PC-9 (cell line): ENCODE measurements at regions of chr9 and their contacts with region 1.

Region 1: GRCh38 chr9:127869310-127870152 is 7.9 kb downstream of the AK1 start:
- DNase-seq: peak; percentile 64 to 94
- H3K4me3 ChIP-seq: no peak overlapping the region
- H3K27ac ChIP-seq: no peak overlapping the region
- H3K4me1 ChIP-seq: peaks cover 4% of the 10 kb centered on the region; the same call in 1 of the 2 replicates
- H3K27me3 ChIP-seq: no peaks in the 10 kb centered on the region
- CTCF ChIP-seq: peak; percentile 91

Region 2: GRCh38 chr9:127742435-127743088 is 127.0 kb before region 1 on chr9:
- CTCF ChIA-PET with region 1: interaction called, 9 read pairs
- POLR2A ChIA-PET with region 1: interaction called, 3 read pairs
- intact Hi-C with region 1: loop called (anchors 1 kb)
- DNase-seq: peak; percentile 49 to 68
- H3K4me3 ChIP-seq: no peak overlapping the region
- H3K27ac ChIP-seq: no peak overlapping the region
- H3K4me1 ChIP-seq: peaks cover 24% of the 10 kb centered on the region
- H3K27me3 ChIP-seq: peaks cover 13% of the 10 kb centered on the region; the same call in 1 of the 2 replicates
- CTCF ChIP-seq: no peak